ENCODE measurements at regions of chr12 and their contacts with region 1.

Region 1: DNA sequence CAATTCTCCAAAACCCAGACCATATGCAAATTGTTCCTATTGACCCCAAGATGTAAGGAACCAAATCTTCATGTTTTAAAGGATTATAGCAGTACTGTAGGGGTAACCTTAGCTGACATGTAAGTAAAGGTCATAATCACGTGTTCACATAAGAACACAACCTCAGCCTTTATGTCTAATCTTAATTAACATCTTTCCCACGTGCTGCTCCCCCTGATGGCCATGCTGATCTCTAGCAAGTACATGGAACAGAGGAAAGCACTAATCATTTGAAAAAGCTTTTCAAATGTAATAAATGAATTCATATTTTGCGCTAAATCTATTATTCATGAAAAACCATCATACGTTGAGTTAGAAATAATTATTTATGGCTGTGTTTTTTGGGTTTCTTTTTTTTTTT is 30.5 kb upstream of the ITPR2 start:
- DNase-seq: peak; percentile 34
- ATAC-seq: peak; percentile 24
- H3K4me3 Mint-ChIP-seq: no peak overlapping the region
- H3K27ac Mint-ChIP-seq: no peak overlapping the region
- H3K4me1 Mint-ChIP-seq: peaks cover 13% of the 10 kb centered on the region
- H3K27me3 Mint-ChIP-seq: peaks cover 3% of the 10 kb centered on the region

Region 2: GRCh38 chr12:26623136-26623535 is 240.4 kb before region 1 on chr12:
- CTCF ChIA-PET with region 1: no interaction called
- POLR2A ChIA-PET with region 1: no interaction called
- intact Hi-C with region 1: no loop called
- DNase-seq: peak; percentile 14
- ATAC-seq: peak; percentile 65
- H3K4me3 Mint-ChIP-seq: no peak overlapping the region
- H3K27ac Mint-ChIP-seq: no peak overlapping the region
- H3K4me1 Mint-ChIP-seq: no peaks in the 10 kb centered on the region
- H3K27me3 Mint-ChIP-seq: no peaks in the 10 kb centered on the region

Region 3: DNA sequence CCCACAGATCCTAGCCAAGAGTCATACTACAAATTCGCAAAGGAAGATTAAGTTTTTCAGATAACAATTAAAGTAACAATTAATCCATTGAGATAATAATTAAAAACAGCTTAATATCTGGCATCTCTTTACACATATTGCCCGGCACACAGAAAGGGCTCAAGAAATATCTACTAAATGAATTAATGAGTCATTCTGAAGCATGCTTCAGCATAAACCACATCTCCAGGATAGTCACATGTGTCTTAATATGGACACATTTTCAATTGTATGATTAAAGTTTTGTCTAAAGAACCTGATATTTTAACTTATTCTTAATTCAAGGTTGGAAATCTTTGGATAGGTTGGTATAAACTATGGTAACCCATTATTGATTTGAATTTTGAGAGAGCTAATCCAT is 40.1 kb before region 1 on chr12:
- CTCF ChIA-PET with region 1: no interaction called
- POLR2A ChIA-PET with region 1: no interaction called
- intact Hi-C with region 1: no loop called
- DNase-seq: no peak
- ATAC-seq: no peak
- H3K4me3 Mint-ChIP-seq: no peak overlapping the region
- H3K27ac Mint-ChIP-seq: no peak overlapping the region
- H3K4me1 Mint-ChIP-seq: peaks cover 45% of the 10 kb centered on the region
- H3K27me3 Mint-ChIP-seq: no peaks in the 10 kb centered on the region

Region 4: GRCh38 chr12:26853303-26854030 is 10.0 kb before region 1 on chr12:
- CTCF ChIA-PET with region 1: interaction called, 5 read pairs
- POLR2A ChIA-PET with region 1: no interaction called
- intact Hi-C with region 1: loop called in 1 of 2 experiments (anchors 2 kb)
- DNase-seq: peak; percentile 84
- ATAC-seq: peak; percentile 93
- H3K4me3 Mint-ChIP-seq: no peak overlapping the region
- H3K27ac Mint-ChIP-seq: no peak overlapping the region
- H3K4me1 Mint-ChIP-seq: no peaks in the 10 kb centered on the region
- H3K27me3 Mint-ChIP-seq: peaks cover 1% of the 10 kb centered on the region